ENCODE measurements at regions of chr13 and their contacts with region 1.

Region 1: GRCh38 chr13:95624020-95624419 is 20.5 kb downstream of the DZIP1 start:
- DNase-seq: peak in 1 of 6 donors; percentile 34
- ATAC-seq: peak; percentile 57 to 89 (median 82)
- H3K4me3 ChIP-seq: no peak overlapping the region
- H3K27ac ChIP-seq: no peak overlapping the region
- H3K4me1 ChIP-seq: peaks cover 0 to 8% (median 4%) of the 10 kb centered on the region in 3 donors
- H3K27me3 ChIP-seq: no peaks in the 10 kb centered on the region
- CTCF ChIP-seq: peak in 3 of 4 donors; percentile 29 to 67 (median 39)

Region 2: DNA sequence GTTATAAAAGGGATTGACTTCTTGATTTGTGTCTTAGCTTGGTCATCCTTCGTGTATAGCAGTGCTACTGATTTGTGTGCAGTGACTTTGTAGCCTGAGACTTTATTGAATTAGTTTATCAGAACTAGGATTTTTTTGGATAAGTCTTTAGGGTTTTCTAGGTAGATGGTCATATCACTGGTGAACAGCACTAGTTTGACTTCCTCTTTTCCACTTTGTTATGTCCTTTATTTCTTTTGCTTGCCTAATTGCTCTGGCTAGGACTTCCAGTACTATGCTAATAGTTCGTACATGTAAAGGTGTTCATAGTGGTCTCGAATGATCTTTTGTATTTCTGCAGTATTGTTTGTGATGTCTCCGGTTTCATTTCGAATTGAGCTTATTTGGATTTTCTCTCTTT is 198.3 kb after region 1 on chr13:
- intact Hi-C with region 1: loop called in 1 of 3 experiments (anchors 10 kb)
- DNase-seq: no peak
- ATAC-seq: no peak
- H3K4me3 ChIP-seq: no peak overlapping the region
- H3K27ac ChIP-seq: no peak overlapping the region
- H3K4me1 ChIP-seq: no peaks in the 10 kb centered on the region
- H3K27me3 ChIP-seq: no peaks in the 10 kb centered on the region
- CTCF ChIP-seq: no peak

Region 3: GRCh38 chr13:95834134-95834765 is 210.2 kb after region 1 on chr13:
- intact Hi-C with region 1: loop called in 2 of 3 experiments (anchors 10 kb)
- DNase-seq: peak; percentile 39 to 73 (median 46)
- ATAC-seq: peak; percentile 80 to 100 (median 96)
- H3K4me3 ChIP-seq: no peak overlapping the region
- H3K27ac ChIP-seq: no peak overlapping the region
- H3K4me1 ChIP-seq: peaks cover 0 to 7% (median 5%) of the 10 kb centered on the region in 3 donors
- H3K27me3 ChIP-seq: no peaks in the 10 kb centered on the region
- CTCF ChIP-seq: peak; percentile 71 to 91 (median 83)

Region 4: GRCh38 chr13:95914991-95915501 is 291.0 kb after region 1 on chr13:
- intact Hi-C with region 1: no loop called
- DNase-seq: no peak
- ATAC-seq: no peak
- H3K4me3 ChIP-seq: no peak overlapping the region
- H3K27ac ChIP-seq: no peak overlapping the region
- H3K4me1 ChIP-seq: no peaks in the 10 kb centered on the region
- H3K27me3 ChIP-seq: no peaks in the 10 kb centered on the region
- CTCF ChIP-seq: no peak

Measured in pancreas (tissue), 10 donors.